Posterior cingulate gyrus (tissue), 11 donors: ENCODE measurements at regions of chr1 and their contacts with region 1.

Region 1: GRCh38 chr1:66764994-66765578 is 12.8 kb downstream of the DYNLT5 start:
- DNase-seq: peak in 3 of 10 donors; percentile 9 to 33 (median 24)

Region 2: GRCh38 chr1:66924756-66925557 is 159.9 kb after region 1 on chr1 and contains the starts of genes DNAI4 and MIER1:
- intact Hi-C with region 1: loop called (anchors 5 kb)
- DNase-seq: peak; percentile 93 to 99 (median 96)

Region 3: GRCh38 chr1:67149179-67149770 is 384.2 kb after region 1 on chr1:
- intact Hi-C with region 1: loop called (anchors 1 kb)
- DNase-seq: peak in 7 of 10 donors; percentile 32 to 86 (median 56)

Region 4: DNA sequence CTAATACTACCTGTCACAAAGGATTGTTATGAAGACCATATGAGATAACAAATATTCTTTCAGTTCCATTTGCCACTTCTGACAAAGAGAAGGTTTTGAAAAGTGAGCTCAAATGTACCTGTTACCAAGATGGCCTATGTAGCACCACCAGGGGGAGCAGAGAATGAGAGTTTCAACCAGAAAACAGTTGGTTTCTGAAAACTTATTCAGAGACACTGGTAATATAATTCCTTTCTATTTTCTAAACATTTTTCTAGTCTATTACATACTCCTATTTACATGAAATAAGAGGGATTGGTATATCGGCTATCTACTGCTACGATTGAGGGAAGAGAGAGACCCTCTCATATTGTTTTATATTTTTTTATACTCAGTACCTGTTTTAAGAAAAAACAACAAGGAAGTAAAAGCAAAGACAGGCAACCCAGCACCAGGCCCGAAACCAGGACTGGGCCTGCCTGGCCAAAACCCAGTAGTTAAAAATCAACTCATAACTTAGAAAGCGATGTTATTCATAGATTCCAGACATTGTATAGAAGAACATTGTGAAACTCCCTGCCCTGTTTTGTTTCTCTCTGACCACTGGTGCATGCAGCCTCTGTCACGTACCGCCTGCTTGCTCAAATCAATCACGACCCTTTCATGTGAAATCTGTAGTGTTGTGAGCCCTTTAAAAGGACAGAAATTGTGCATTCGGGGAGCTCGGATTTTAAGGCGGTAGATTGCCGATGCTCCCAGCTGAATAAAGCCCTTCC is 449.5 kb after region 1 on chr1:
- intact Hi-C with region 1: loop called (anchors 10 kb)
- DNase-seq: peak in 1 of 10 donors; percentile 30

Region 5: DNA sequence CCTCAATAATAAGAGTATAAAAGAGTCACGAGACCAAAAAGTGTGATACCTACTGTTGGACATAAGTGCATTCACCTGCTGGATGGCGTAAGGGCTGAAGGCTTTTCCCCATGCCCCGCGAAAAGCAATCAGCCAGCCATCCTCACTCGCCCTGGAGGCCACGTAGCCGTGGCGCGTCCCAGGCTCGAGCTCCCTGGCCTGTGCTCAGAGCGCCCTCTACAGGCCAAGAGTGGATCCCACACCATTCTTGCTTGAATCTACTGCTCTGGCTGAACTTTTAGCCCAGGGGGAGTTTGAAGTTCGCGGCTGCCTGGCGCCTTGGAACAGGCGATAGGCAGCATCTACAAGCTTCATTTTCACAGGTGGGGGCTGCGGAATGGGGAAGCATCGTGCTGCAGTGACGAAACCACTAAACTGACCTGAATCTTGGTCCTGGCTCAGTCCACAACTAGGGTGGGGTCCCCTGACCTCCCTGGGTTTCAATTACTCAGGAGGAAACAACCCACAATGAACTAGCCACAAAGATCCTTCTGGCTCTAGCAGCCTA is 735.4 kb after region 1 on chr1:
- intact Hi-C with region 1: loop called (anchors 10 kb)
- DNase-seq: peak; percentile 59 to 97 (median 84)